ENCODE measurements at regions of chr14 and their contacts with region 1.

Region 1: DNA sequence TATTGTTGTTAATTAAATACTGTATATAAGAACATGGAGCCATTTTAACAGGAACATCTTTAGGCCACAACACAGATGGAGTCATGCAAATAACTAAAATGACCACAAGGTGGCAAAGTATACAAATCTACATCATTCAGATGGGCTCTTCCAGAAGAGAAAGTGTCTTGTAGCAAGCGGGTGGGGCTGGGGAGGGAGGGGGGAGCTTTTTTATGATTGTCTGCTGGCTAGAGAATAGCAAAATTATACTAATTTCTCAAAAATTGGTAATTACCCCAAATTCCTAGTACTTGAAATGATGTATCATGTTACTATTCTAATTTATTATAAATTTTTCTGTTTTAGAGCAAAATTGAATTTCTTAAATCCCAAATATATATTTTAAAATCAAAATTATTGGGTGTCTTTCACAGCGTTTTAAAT is 378.7 kb downstream of the PRKD1 start:
- ATAC-seq: peak; percentile 37 to 88 (median 62)
- H3K4me3 ChIP-seq: no peak overlapping the region
- H3K27ac ChIP-seq: no peak overlapping the region
- H3K4me1 ChIP-seq: no peaks in the 10 kb centered on the region

Region 2: DNA sequence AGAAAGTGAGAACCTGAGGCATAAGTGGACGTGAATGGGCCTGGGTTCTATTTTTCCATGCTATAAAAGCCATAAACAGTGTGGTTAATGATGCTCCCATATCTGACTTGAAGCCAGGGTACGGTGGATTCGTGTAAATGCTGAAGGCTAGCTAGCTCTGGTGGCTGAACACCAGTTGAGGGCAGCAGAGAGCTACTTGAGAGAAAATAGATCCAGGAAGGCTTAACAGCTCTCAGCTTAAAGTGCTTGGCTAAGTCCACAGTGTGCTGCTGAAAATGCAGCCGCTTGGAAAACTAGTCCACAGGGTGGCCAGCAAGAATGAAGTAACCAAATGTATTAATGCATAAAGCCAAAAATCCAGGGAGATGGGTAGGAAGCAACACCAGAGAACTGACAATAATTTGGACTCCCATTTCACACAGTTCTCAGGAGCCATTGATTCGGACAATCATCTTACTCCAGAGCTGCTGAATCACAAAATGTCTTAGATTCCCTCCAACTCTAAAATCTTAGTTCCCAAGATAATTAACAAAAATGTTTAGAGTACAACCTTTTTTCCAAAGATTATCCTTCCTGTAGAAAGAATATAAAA is 797.4 kb before region 1 on chr14:
- in situ Hi-C with region 1: loop called in 3 of 9 experiments (anchors 25 kb)
- ATAC-seq: peak; percentile 59 to 93 (median 76)
- H3K4me3 ChIP-seq: no peak overlapping the region
- H3K27ac ChIP-seq: no peak overlapping the region
- H3K4me1 ChIP-seq: no peaks in the 10 kb centered on the region

Region 3: GRCh38 chr14:28785096-28785952 is 763.6 kb before region 1 on chr14:
- in situ Hi-C with region 1: loop called in 1 of 9 experiments (anchors 25 kb)
- ATAC-seq: peak in 7 of 8 experiments; percentile 43 to 98 (median 81)
- H3K4me3 ChIP-seq: peak overlapping the region; percentile 15 to 40 (median 35)
- H3K27ac ChIP-seq: no peak overlapping the region
- H3K4me1 ChIP-seq: peaks cover 5% of the 10 kb centered on the region in 2 donors

Region 4: GRCh38 chr14:30005114-30005808 is 456.3 kb after region 1 on chr14:
- in situ Hi-C with region 1: loop called in 8 of 9 experiments (anchors 10 to 25 kb)
- ATAC-seq: peak in 7 of 8 experiments; percentile 53 to 90 (median 65)
- H3K4me3 ChIP-seq: no peak overlapping the region
- H3K27ac ChIP-seq: no peak overlapping the region
- H3K4me1 ChIP-seq: peaks cover 6 to 12% of the 10 kb centered on the region in 2 donors

Region 5: DNA sequence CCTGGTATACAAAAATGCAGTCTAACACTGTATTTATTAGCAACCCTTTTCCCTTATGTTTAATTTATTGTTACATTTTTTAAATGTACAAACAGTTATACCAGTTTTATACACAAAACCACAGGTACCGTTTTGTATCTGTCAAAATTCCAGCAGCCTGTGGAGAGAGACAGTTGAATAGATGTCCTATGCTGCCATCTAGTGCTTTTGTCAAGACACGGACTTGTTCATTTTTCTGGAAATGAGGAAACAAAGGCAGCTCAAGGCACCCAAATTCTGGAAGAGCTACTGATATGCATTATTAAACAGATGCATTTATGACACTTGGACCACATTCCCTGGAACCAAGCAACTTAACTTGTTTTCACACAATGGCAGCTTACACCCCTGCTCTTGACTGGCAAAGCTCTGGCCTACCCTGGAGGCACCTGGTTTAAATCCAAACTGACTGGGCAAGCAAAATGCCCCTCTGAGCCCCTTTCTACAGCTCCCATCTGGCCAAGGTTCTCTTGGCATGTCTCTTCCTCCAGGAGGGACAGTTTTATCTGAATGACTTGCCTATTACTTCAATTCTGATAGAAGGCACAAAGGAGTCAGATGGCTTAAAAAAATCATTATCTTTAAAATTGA is 665.6 kb after region 1 on chr14:
- in situ Hi-C with region 1: loop called in 7 of 9 experiments (anchors 10 to 25 kb)
- ATAC-seq: peak in 7 of 8 experiments; percentile 40 to 73 (median 60)
- H3K4me3 ChIP-seq: no peak overlapping the region
- H3K27ac ChIP-seq: no peak overlapping the region
- H3K4me1 ChIP-seq: peaks cover 0 to 3% of the 10 kb centered on the region in 2 donors

Region 6: GRCh38 chr14:30443368-30444007 is 894.5 kb after region 1 on chr14:
- in situ Hi-C with region 1: loop called in 1 of 9 experiments (anchors 25 kb)
- ATAC-seq: peak in 6 of 8 experiments; percentile 42 to 86 (median 56)
- H3K4me3 ChIP-seq: no peak overlapping the region
- H3K27ac ChIP-seq: no peak overlapping the region
- H3K4me1 ChIP-seq: peaks cover 8 to 12% of the 10 kb centered on the region in 2 donors